AG04449 (cell line): ENCODE measurements at regions of chr3 and their contacts with region 1.

Region 1: DNA sequence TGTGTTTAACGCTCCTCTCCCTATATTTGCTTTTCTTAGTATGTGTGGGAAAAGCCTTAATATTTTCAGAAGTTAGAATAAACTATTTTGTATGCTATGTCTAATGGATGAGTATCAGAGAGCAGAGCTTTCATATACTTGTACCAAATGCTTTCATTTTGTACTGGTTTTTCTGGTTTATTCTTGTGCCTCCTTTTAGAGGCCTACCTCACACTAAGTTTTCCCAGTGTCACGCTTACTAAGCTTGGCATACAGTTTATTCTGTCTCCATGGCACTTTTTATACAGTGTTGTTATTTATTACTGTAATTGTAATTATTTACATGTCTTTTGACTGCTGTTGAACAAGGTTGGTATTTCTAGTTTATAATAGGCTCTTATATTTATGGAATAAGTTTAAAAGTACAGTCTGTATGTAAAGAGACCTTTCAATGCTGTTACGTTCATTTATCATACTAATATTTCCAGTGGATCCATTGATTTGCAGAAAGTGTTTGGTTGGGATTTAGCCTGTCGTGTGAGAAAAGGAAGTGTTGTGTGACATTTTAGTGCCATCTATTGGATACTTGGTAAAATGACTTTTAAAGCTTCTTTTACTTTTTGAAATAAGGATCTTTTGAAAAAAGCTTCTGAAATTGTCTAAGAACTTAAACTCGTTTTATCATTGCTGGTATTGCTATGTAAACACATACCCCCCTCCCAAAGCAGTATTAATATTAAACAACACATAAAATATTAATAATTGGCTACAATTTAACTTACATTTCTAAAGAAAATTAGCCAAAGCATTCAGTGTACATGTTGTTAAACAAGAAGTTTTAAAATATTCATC is 5.2 kb upstream of the EBLN2 start:
- DNase-seq: no peak
- H3K4me3 ChIP-seq: no peak overlapping the region
- CTCF ChIP-seq: peak; percentile 39

Region 2: DNA sequence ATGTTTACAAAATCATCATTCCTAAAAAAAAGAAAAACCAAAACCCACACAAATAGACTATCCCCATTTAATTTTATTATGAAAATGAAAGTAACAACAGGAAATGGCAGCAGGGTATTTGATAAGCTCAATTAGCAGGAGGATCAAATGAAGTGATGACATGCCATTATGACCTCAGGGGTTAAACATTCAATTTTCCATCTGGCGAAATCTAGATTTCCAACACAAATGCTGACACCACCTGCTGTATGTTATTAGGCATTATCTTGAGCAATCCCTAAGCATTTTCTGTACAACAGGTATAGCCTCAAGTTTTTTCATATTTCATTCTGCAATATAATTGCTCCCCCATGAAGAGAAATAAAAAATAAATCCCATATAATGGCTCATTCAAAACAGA is 265.1 kb before region 1 on chr3:
- CTCF ChIA-PET with region 1: no interaction called
- POLR2A ChIA-PET with region 1: no interaction called
- DNase-seq: no peak
- H3K4me3 ChIP-seq: no peak overlapping the region
- CTCF ChIP-seq: no peak

Region 3: GRCh38 chr3:72938471-72939265 is 117.6 kb before region 1 on chr3:
- CTCF ChIA-PET with region 1: interaction called, 37 read pairs
- POLR2A ChIA-PET with region 1: no interaction called
- DNase-seq: peak; percentile 91
- H3K4me3 ChIP-seq: no peak overlapping the region
- CTCF ChIP-seq: peak; percentile 44

Region 4: GRCh38 chr3:73045391-73045790 is 10.8 kb before region 1 on chr3:
- CTCF ChIA-PET with region 1: interaction called, 24 read pairs
- POLR2A ChIA-PET with region 1: no interaction called
- DNase-seq: no peak
- H3K4me3 ChIP-seq: no peak overlapping the region
- CTCF ChIP-seq: no peak

Region 5: GRCh38 chr3:73070675-73071575 is 14.7 kb after region 1 on chr3:
- CTCF ChIA-PET with region 1: interaction called, 15 read pairs
- POLR2A ChIA-PET with region 1: no interaction called
- DNase-seq: peak; percentile 93
- H3K4me3 ChIP-seq: no peak overlapping the region
- CTCF ChIP-seq: no peak